CD4-positive, alpha-beta T cell (primary cell): ENCODE measurements at regions of chr7 and their contacts with region 1.

Region 1: GRCh38 chr7:106041140-106041717 is 70.9 kb downstream of the SYPL1 start:
- DNase-seq: peak in 5 of 14 experiments; percentile 23 to 61 (median 50)
- ATAC-seq: peak; percentile 22
- H3K4me3 ChIP-seq: no peak overlapping the region
- H3K4me3 Mint-ChIP-seq: no peak overlapping the region
- H3K27ac ChIP-seq: no peak overlapping the region
- H3K27ac Mint-ChIP-seq: peak overlapping the region; percentile 67
- H3K4me1 ChIP-seq: peaks cover 29% of the 10 kb centered on the region
- H3K4me1 Mint-ChIP-seq: peaks cover 50% of the 10 kb centered on the region
- H3K27me3 ChIP-seq: peaks cover 0 to 4% of the 10 kb centered on the region in 2 experiments
- H3K27me3 Mint-ChIP-seq: peaks cover 4% of the 10 kb centered on the region
- CTCF ChIP-seq: peak; percentile 57

Region 2: DNA sequence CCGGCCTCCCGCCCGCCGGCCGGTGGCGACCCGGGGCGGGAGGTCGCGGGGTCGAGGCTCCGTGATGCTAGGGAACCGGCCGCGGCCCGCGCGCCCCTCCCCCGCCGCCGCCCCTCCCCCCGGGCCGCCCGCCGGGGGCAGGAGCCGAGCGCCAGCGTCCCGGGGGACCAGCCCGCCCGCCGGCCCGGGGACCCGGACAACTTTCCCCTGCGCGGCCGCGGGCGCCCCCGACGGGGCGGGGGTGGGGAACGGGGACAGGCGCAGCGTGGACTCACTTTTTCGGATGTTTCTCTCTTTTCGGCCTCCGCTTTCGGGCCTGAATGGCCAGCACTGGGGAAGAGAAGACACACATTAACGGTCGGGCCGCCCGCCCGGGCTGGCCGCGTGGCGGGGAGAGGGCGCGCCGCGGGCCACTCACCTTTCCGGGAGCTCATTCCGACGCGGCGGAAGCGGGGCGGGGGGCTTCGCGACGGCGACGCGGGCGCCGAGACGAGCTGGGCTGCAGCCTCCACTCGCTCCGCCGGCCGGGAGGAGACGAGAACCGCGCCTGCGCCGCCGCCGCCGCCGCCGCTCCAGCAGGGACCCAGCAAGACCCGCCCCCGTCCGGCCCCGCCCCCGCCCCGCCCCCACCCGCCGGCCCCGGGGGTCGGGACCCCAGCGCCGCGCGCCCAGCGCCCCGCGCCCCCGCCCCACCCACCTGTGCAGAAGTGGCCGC is 652.7 kb before region 1 on chr7 and contains the start of gene SRPK2:
- CTCF ChIA-PET with region 1: no interaction called
- POLR2A ChIA-PET with region 1: no interaction called
- intact Hi-C with region 1: no loop called
- DNase-seq: peak; percentile 54 to 88 (median 74)
- ATAC-seq: peak; percentile 84
- H3K4me3 ChIP-seq: peak within 1 kb of the TSS; percentile 63
- H3K4me3 Mint-ChIP-seq: peak within 1 kb of the TSS; percentile 100
- H3K27ac ChIP-seq: peak within 1 kb of the TSS in 1 of 2 donors; percentile 31
- H3K27ac Mint-ChIP-seq: peak within 1 kb of the TSS; percentile 93
- H3K4me1 ChIP-seq: peaks cover 23% of the 10 kb centered on the region
- H3K4me1 Mint-ChIP-seq: peaks cover 51% of the 10 kb centered on the region
- H3K27me3 ChIP-seq: no peaks in the 10 kb centered on the region
- H3K27me3 Mint-ChIP-seq: no peaks in the 10 kb centered on the region
- CTCF ChIP-seq: no peak
- total RNA-seq, gene SRPK2: 39.9 to 40.9 TPM

Region 3: DNA sequence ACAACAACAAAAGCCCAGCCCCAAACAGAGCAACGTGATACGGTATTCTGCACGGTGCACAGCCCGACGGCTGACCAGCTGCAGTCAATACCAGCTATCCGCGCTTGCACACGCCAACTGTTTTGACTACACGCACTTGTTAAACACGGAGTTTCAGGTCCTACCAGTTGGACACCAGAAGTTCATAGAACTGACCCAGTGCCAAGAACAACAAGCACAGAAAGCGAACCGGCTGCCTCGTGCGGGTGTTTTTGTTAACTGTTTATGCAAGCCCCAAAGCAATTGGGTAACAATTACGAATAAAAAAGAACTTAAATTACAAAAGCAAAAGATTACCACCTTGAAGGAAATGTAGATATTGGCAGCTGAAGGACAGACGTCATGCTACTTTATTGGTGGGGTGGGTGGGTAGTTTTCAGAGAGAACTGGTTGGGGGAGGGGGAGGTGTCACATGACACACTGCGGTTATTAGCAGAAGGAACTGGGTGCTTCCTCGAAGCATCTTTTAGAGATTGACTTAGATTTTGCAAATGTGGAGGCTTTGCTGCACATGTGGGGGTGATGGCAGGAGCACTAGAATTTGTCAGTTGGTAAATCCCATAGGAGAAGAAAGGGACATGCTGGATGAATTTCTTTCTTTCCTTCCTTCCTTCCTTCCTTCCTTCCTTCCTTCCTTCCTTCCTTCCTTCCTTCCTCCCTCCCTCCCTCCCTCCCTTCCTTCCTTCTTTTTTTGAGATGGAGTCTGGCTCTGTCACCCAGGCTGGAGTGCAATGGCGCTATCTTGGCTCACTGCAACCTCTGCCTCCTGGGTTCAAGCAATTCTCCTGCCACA is 349.3 kb before region 1 on chr7:
- CTCF ChIA-PET with region 1: interaction called, 5 read pairs
- POLR2A ChIA-PET with region 1: no interaction called
- intact Hi-C with region 1: loop called in 1 of 2 experiments (anchors 1 kb)
- DNase-seq: peak; percentile 50 to 94 (median 68)
- ATAC-seq: peak; percentile 82
- H3K4me3 ChIP-seq: peak overlapping the region; percentile 92
- H3K4me3 Mint-ChIP-seq: peak overlapping the region; percentile 87
- H3K27ac ChIP-seq: peak overlapping the region; percentile 94 to 97
- H3K27ac Mint-ChIP-seq: peak overlapping the region; percentile 98
- H3K4me1 ChIP-seq: peaks cover 53% of the 10 kb centered on the region
- H3K4me1 Mint-ChIP-seq: peaks cover 62% of the 10 kb centered on the region
- H3K27me3 ChIP-seq: no peaks in the 10 kb centered on the region
- H3K27me3 Mint-ChIP-seq: no peaks in the 10 kb centered on the region
- CTCF ChIP-seq: no peak

Region 4: DNA sequence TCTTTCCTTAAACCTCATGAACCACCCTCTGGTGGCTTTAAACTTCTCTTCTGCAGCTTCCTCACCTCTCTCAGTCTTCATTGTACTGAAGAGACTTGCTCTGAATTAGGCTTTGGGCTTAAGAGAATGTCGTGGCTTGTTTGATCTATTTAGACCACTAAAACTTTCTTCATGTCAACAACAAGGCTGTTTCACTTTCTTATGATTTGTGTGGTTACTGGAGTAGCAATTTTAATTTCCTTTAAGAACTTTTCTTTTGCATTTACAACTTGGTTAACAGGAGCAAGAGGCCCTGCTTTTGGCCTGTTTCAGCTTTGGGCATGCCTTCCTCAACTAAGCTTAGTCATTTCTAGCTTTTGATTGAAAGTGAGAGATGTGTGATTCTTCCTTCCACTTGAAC is 116.3 kb before region 1 on chr7:
- CTCF ChIA-PET with region 1: no interaction called
- POLR2A ChIA-PET with region 1: interaction called, 4 read pairs
- intact Hi-C with region 1: loop called in 1 of 2 experiments (anchors 2 kb)
- DNase-seq: peak in 6 of 14 experiments; percentile 2 to 66 (median 38)
- ATAC-seq: peak; percentile 87
- H3K4me3 ChIP-seq: no peak overlapping the region
- H3K4me3 Mint-ChIP-seq: peak overlapping the region; percentile 22
- H3K27ac ChIP-seq: no peak overlapping the region
- H3K27ac Mint-ChIP-seq: peak overlapping the region; percentile 87
- H3K4me1 ChIP-seq: peaks cover 16% of the 10 kb centered on the region
- H3K4me1 Mint-ChIP-seq: peaks cover 41% of the 10 kb centered on the region
- H3K27me3 ChIP-seq: no peaks in the 10 kb centered on the region
- H3K27me3 Mint-ChIP-seq: no peaks in the 10 kb centered on the region
- CTCF ChIP-seq: no peak

Region 5: GRCh38 chr7:105934572-105935185 is 106.5 kb before region 1 on chr7:
- CTCF ChIA-PET with region 1: interaction called, 3 read pairs
- POLR2A ChIA-PET with region 1: no interaction called
- intact Hi-C with region 1: loop called in 1 of 2 experiments (anchors 1 kb)
- DNase-seq: peak in 4 of 14 experiments; percentile 6 to 33 (median 28)
- ATAC-seq: no peak
- H3K4me3 ChIP-seq: no peak overlapping the region
- H3K4me3 Mint-ChIP-seq: no peak overlapping the region
- H3K27ac ChIP-seq: no peak overlapping the region
- H3K27ac Mint-ChIP-seq: no peak overlapping the region
- H3K4me1 ChIP-seq: no peaks in the 10 kb centered on the region
- H3K4me1 Mint-ChIP-seq: peaks cover 24% of the 10 kb centered on the region
- H3K27me3 ChIP-seq: no peaks in the 10 kb centered on the region
- H3K27me3 Mint-ChIP-seq: no peaks in the 10 kb centered on the region
- CTCF ChIP-seq: no peak

Region 6: GRCh38 chr7:105990726-105991453 is 50.3 kb before region 1 on chr7:
- CTCF ChIA-PET with region 1: no interaction called
- POLR2A ChIA-PET with region 1: no interaction called
- intact Hi-C with region 1: loop called in 1 of 2 experiments (anchors 5 kb)
- DNase-seq: no peak
- ATAC-seq: no peak
- H3K4me3 ChIP-seq: no peak overlapping the region
- H3K4me3 Mint-ChIP-seq: no peak overlapping the region
- H3K27ac ChIP-seq: no peak overlapping the region
- H3K27ac Mint-ChIP-seq: no peak overlapping the region
- H3K4me1 ChIP-seq: no peaks in the 10 kb centered on the region
- H3K4me1 Mint-ChIP-seq: peaks cover 30% of the 10 kb centered on the region
- H3K27me3 ChIP-seq: no peaks in the 10 kb centered on the region
- H3K27me3 Mint-ChIP-seq: no peaks in the 10 kb centered on the region
- CTCF ChIP-seq: no peak

Region 7: GRCh38 chr7:106009403-106010226 is 31.6 kb before region 1 on chr7:
- CTCF ChIA-PET with region 1: interaction called, 4 read pairs
- POLR2A ChIA-PET with region 1: no interaction called
- intact Hi-C with region 1: loop called (anchors 1 to 2 kb)
- DNase-seq: peak; percentile 70 to 91 (median 78)
- ATAC-seq: peak; percentile 97
- H3K4me3 ChIP-seq: no peak overlapping the region
- H3K4me3 Mint-ChIP-seq: peak overlapping the region; percentile 16
- H3K27ac ChIP-seq: no peak overlapping the region
- H3K27ac Mint-ChIP-seq: peak overlapping the region; percentile 38
- H3K4me1 ChIP-seq: peaks cover 21% of the 10 kb centered on the region
- H3K4me1 Mint-ChIP-seq: peaks cover 51% of the 10 kb centered on the region
- H3K27me3 ChIP-seq: no peaks in the 10 kb centered on the region
- H3K27me3 Mint-ChIP-seq: no peaks in the 10 kb centered on the region
- CTCF ChIP-seq: peak; percentile 99

Region 8: DNA sequence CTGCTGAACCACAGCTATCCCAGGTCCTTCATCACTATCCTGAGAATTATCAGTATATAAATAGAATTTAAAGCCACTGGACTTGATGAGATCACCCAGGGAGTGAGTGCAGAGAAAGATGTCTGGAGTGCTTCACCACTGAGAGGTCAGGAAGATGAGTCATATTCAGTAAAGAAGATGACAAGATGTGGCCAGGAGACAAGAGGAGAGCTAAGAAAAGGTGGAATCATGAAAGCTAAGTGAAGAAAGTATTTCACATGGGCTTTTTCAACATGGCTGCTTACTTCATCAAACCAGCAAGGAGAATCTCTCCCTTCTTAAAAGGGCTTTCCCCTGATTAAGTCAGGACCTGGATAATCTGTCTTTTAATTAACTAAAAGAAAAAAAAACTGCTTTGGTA is 994.2 kb after region 1 on chr7:
- CTCF ChIA-PET with region 1: no interaction called
- POLR2A ChIA-PET with region 1: no interaction called
- intact Hi-C with region 1: no loop called
- DNase-seq: no peak
- ATAC-seq: no peak
- H3K4me3 ChIP-seq: no peak overlapping the region
- H3K4me3 Mint-ChIP-seq: no peak overlapping the region
- H3K27ac ChIP-seq: no peak overlapping the region
- H3K27ac Mint-ChIP-seq: no peak overlapping the region
- H3K4me1 ChIP-seq: no peaks in the 10 kb centered on the region
- H3K4me1 Mint-ChIP-seq: no peaks in the 10 kb centered on the region
- H3K27me3 ChIP-seq: no peaks in the 10 kb centered on the region
- H3K27me3 Mint-ChIP-seq: no peaks in the 10 kb centered on the region
- CTCF ChIP-seq: no peak